K562 (cell line): ENCODE measurements at regions of chr16 and their contacts with region 1.

Region 1: GRCh38 chr16:4200000-4200780 is 41.7 kb downstream of the SRL start:
- DNase-seq: peak; percentile 73 to 80 (median 78)
- ATAC-seq: peak; percentile 96
- H3K4me3 ChIP-seq: no peak overlapping the region
- H3K27ac ChIP-seq: no peak overlapping the region
- H3K4me1 ChIP-seq: peaks cover 4 to 5% of the 10 kb centered on the region in 2 experiments; a peak in 3 of 5 replicates
- H3K27me3 ChIP-seq: peaks cover 12 to 50% of the 10 kb centered on the region in 2 experiments; a peak in 4 of 5 replicates
- CTCF ChIP-seq: peak; percentile 82 to 88 (median 87)
- EP300 ChIP-seq: no peak
- POLR2A ChIP-seq: no peak
- RAD21 ChIP-seq: peak; percentile 83 to 92

Region 2: GRCh38 chr16:3983081-3983520 is 217.1 kb before region 1 on chr16:
- CTCF ChIA-PET with region 1: no interaction called
- POLR2A ChIA-PET with region 1: no interaction called
- in situ Hi-C with region 1: no loop called
- intact Hi-C with region 1: loop called (anchors 10 kb)
- DNase-seq: peak; percentile 78 to 82 (median 80)
- ATAC-seq: peak; percentile 99
- H3K4me3 ChIP-seq: no peak overlapping the region
- H3K27ac ChIP-seq: no peak overlapping the region
- H3K4me1 ChIP-seq: peaks cover 0 to 38% of the 10 kb centered on the region in 2 experiments; a peak in 3 of 5 replicates
- H3K27me3 ChIP-seq: peaks cover 61 to 97% of the 10 kb centered on the region in 2 experiments
- CTCF ChIP-seq: peak; percentile 84 to 95 (median 92)
- EP300 ChIP-seq: no peak
- POLR2A ChIP-seq: no peak
- RAD21 ChIP-seq: peak; percentile 74 to 90

Region 3: DNA sequence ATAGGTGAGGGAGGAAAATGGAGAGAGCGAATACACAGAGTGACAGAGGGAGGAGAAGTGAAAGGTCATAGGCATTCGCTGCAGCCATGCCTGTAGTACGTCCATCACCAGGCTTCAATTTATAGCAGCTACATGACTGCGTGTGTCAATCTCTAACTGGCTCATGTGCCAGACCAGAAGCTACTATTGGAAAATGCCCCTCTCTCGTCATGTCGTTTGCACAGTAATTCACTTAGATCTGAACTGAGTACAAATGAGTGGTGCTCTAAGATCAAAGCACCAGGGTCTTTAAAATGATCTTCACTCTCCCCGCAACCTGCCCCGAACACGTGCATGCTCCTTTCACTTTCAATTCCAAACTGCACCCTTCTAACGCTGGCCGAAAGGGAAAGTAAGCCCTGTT is 135.2 kb before region 1 on chr16:
- CTCF ChIA-PET with region 1: no interaction called
- POLR2A ChIA-PET with region 1: no interaction called
- in situ Hi-C with region 1: no loop called
- intact Hi-C with region 1: no loop called
- DNase-seq: no peak
- ATAC-seq: no peak
- H3K4me3 ChIP-seq: no peak overlapping the region
- H3K27ac ChIP-seq: no peak overlapping the region
- H3K4me1 ChIP-seq: no peaks in the 10 kb centered on the region
- H3K27me3 ChIP-seq: peaks cover 7 to 24% of the 10 kb centered on the region in 2 experiments; a peak in 2 of 5 replicates
- CTCF ChIP-seq: no peak
- EP300 ChIP-seq: no peak
- POLR2A ChIP-seq: no peak
- RAD21 ChIP-seq: no peak

Region 4: GRCh38 chr16:4253394-4254150 is 53.4 kb after region 1 on chr16:
- CTCF ChIA-PET with region 1: interaction called, 6 read pairs
- POLR2A ChIA-PET with region 1: interaction called, 3 read pairs
- in situ Hi-C with region 1: no loop called
- intact Hi-C with region 1: loop called (anchors 2 kb)
- DNase-seq: peak; percentile 97 to 99 (median 98)
- ATAC-seq: peak; percentile 99
- H3K4me3 ChIP-seq: peak overlapping the region; percentile 55
- H3K27ac ChIP-seq: peak overlapping the region; percentile 81
- H3K4me1 ChIP-seq: peaks cover 12 to 36% of the 10 kb centered on the region in 2 experiments
- H3K27me3 ChIP-seq: no peaks in the 10 kb centered on the region
- CTCF ChIP-seq: no peak
- EP300 ChIP-seq: no peak
- POLR2A ChIP-seq: peak; percentile 96
- RAD21 ChIP-seq: peak; percentile 90 to 93; a peak in 3 of 4 replicates

Region 5: GRCh38 chr16:4351880-4352279 is 151.7 kb after region 1 on chr16:
- CTCF ChIA-PET with region 1: interaction called, 10 read pairs
- POLR2A ChIA-PET with region 1: no interaction called
- in situ Hi-C with region 1: no loop called
- intact Hi-C with region 1: no loop called
- DNase-seq: peak in 1 of 4 experiments; percentile 30
- ATAC-seq: no peak
- H3K4me3 ChIP-seq: no peak overlapping the region
- H3K27ac ChIP-seq: peak overlapping the region; percentile 59; the same call in 2 of the 3 replicates
- H3K4me1 ChIP-seq: peaks cover 22 to 46% of the 10 kb centered on the region in 2 experiments; a peak in 4 of 5 replicates
- H3K27me3 ChIP-seq: no peaks in the 10 kb centered on the region
- CTCF ChIP-seq: no peak
- EP300 ChIP-seq: no peak
- POLR2A ChIP-seq: no peak
- RAD21 ChIP-seq: no peak